ENCODE measurements at regions of chr7 and their contacts with region 1.

Region 1: GRCh38 chr7:90430614-90431471 is 27.6 kb downstream of the CLDN12 start:
- DNase-seq: peak; percentile 10
- ATAC-seq: no peak; the same call in 1 of the 2 replicates
- H3K4me3 ChIP-seq: no peak overlapping the region
- H3K27ac ChIP-seq: no peak overlapping the region
- H3K4me1 ChIP-seq: no peaks in the 10 kb centered on the region
- H3K27me3 ChIP-seq: no peaks in the 10 kb centered on the region
- CTCF ChIP-seq: no peak
- POLR2A ChIP-seq: no peak
- RAD21 ChIP-seq: no peak

Region 2: GRCh38 chr7:90165724-90166123 is 265.1 kb before region 1 on chr7:
- CTCF ChIA-PET with region 1: no interaction called
- POLR2A ChIA-PET with region 1: no interaction called
- dilution Hi-C with region 1: no loop called
- in situ Hi-C with region 1: loop called (anchors 10 kb)
- intact Hi-C with region 1: no loop called
- DNase-seq: no peak
- ATAC-seq: no peak
- H3K4me3 ChIP-seq: no peak overlapping the region
- H3K27ac ChIP-seq: no peak overlapping the region
- H3K4me1 ChIP-seq: no peaks in the 10 kb centered on the region
- H3K27me3 ChIP-seq: no peaks in the 10 kb centered on the region
- CTCF ChIP-seq: no peak
- POLR2A ChIP-seq: no peak
- RAD21 ChIP-seq: no peak

Region 3: GRCh38 chr7:90412458-90413184 is 18.2 kb before region 1 on chr7:
- CTCF ChIA-PET with region 1: no interaction called
- POLR2A ChIA-PET with region 1: no interaction called
- dilution Hi-C with region 1: no loop called
- in situ Hi-C with region 1: no loop called
- intact Hi-C with region 1: no loop called
- DNase-seq: no peak
- ATAC-seq: no peak
- H3K4me3 ChIP-seq: no peak overlapping the region
- H3K27ac ChIP-seq: no peak overlapping the region
- H3K4me1 ChIP-seq: no peaks in the 10 kb centered on the region
- H3K27me3 ChIP-seq: no peaks in the 10 kb centered on the region
- CTCF ChIP-seq: 0 out of 2 replicates have a peak, but pooled peaks have one; percentile 19
- POLR2A ChIP-seq: no peak
- RAD21 ChIP-seq: no peak; the same call in 1 of the 2 replicates

Region 4: DNA sequence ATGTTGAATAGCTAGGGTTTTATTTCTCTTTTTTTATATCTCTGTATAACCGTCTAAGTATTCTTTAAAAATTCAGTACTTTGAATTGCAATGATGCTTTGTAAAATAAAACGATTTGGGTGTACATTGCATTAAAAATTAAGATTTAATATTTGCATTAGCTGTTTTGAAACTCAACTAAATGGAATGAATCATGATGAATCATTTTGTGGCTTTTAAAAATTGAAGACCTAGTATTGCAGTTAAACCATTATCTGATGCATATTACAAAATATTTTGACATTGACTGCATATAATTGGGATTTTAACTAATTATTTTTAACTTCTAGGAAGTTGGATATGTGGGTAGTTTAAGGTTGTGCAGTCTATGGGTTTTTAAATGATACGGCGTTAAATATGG is 479.3 kb after region 1 on chr7:
- CTCF ChIA-PET with region 1: no interaction called
- POLR2A ChIA-PET with region 1: no interaction called
- dilution Hi-C with region 1: no loop called
- in situ Hi-C with region 1: no loop called
- intact Hi-C with region 1: no loop called
- DNase-seq: peak; percentile 33
- ATAC-seq: no peak
- H3K4me3 ChIP-seq: no peak overlapping the region
- H3K27ac ChIP-seq: no peak overlapping the region
- H3K4me1 ChIP-seq: no peaks in the 10 kb centered on the region
- H3K27me3 ChIP-seq: no peaks in the 10 kb centered on the region
- CTCF ChIP-seq: no peak
- POLR2A ChIP-seq: no peak
- RAD21 ChIP-seq: no peak

Measured in IMR-90 (cell line).